ENCODE measurements at regions of chr3 and their contacts with region 1.

Region 1: GRCh38 chr3:156509189-156510174 is 45.4 kb downstream of the SSR3 start:
- DNase-seq: no peak
- H3K4me3 Mint-ChIP-seq: no peak overlapping the region
- H3K27ac Mint-ChIP-seq: no peak overlapping the region
- H3K4me1 Mint-ChIP-seq: peaks cover 15% of the 10 kb centered on the region
- H3K27me3 Mint-ChIP-seq: peaks cover 4% of the 10 kb centered on the region

Region 2: DNA sequence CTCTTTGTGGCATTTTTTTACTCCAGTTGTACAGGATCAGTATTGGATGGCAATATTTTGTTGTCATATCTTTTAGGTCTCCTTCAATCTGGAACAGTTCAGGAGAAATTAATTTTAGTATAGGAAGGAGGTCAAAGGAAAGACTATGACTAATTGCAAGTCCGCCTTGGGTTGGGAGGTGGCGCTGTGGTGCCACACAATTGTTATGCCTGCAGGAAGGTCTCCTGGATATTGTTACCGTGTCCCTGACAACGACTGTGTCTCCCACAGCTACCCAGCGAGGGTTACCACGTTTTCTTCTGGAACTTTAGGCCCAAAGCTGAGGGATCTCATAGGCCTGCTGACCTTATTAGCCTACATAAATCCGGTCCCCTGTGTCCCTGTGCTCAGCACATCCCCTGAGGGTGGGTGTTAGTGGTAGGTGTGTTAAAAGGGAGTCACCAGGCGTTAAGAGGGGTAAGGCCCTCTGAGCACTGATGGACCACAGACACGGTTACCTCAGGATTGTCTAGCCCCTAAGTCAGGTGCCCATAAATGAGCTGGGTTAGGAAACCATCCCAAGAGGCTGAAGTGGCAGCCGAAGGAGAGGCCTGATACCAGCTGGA is 357.6 kb before region 1 on chr3:
- CTCF ChIA-PET with region 1: interaction called, 86 read pairs
- intact Hi-C with region 1: loop called (anchors 1 kb)
- DNase-seq: peak; percentile 77
- H3K4me3 Mint-ChIP-seq: no peak overlapping the region
- H3K27ac Mint-ChIP-seq: no peak overlapping the region
- H3K4me1 Mint-ChIP-seq: peaks cover 3% of the 10 kb centered on the region
- H3K27me3 Mint-ChIP-seq: no peaks in the 10 kb centered on the region

Region 3: GRCh38 chr3:156449712-156450574 is 59.5 kb before region 1 on chr3:
- CTCF ChIA-PET with region 1: interaction called, 17 read pairs
- intact Hi-C with region 1: loop called (anchors 1 kb)
- DNase-seq: no peak
- H3K4me3 Mint-ChIP-seq: no peak overlapping the region
- H3K27ac Mint-ChIP-seq: no peak overlapping the region
- H3K4me1 Mint-ChIP-seq: no peaks in the 10 kb centered on the region
- H3K27me3 Mint-ChIP-seq: peaks cover 5% of the 10 kb centered on the region

Region 4: DNA sequence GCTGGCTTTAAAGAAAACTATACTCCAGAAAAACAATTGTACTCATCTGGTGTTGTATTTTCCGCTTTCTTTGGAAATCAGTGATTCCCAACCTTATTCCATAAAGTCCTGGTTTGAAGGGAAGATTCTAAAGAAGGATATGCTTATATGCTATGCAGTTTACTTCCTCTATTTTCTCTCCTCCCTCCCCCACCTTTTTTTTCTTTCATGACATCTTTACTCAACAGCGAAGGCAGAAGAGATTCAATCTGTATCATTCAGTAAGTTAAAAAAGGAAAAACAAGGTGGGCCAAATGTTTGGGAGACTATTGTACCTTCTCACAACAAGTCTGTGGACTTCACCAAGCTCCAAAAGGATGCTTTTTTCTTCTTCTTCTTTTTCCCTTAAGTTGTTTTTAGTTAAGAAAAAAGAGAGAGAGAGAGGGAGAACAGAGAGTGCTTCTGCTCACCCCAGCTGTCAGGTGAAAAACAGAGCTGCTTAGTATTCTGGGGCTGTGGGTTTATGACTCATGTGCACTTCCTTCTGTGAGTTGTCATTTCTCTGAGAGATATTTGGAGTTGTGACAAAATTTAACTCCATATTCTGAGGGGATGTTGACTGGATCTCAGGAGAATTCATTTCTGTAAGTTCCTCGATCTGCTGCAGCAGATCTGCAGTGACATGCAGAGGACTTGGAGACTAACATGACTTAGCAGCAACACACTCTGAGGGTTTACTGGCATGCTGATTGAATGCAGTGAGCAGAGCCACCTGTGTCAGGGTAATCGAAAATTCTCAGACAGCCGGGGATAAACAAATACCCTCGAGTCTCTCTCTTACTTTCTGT is 25.3 kb before region 1 on chr3:
- CTCF ChIA-PET with region 1: interaction called, 7 read pairs
- intact Hi-C with region 1: loop called (anchors 1 kb)
- DNase-seq: peak; percentile 70
- H3K4me3 Mint-ChIP-seq: peak overlapping the region; percentile 51
- H3K27ac Mint-ChIP-seq: peak overlapping the region; percentile 81
- H3K4me1 Mint-ChIP-seq: peaks cover 42% of the 10 kb centered on the region
- H3K27me3 Mint-ChIP-seq: no peaks in the 10 kb centered on the region

Region 5: DNA sequence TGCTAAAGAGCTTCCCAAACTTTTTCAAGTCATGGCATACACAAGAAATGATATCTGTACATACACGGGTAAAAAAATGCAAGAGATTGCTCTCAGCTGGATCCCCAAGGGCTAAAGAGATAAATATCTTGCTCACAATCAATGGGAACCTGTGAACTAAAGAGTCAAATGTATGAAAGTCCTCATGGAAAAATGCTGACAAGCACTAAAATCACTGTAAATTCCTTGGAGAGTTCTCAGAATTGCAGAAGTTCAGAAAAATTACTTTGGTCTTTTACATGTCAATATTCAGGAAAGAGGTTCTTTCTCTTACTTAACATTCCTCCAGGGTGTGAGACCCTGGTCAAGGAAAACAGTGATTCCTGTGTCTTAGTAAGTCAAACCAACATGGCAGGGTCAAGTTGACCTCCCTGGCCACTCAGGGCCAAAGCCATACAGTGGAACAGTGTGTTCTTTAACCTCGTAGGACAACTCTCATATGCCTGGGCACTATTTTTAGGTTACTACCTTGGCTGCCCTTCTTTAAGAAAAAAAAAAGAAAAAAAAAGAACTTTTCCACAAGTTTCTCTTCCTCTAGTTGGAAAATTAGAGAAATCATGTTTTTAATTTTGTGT is 32.7 kb after region 1 on chr3:
- CTCF ChIA-PET with region 1: no interaction called
- intact Hi-C with region 1: loop called (anchors 1 kb)
- DNase-seq: no peak
- H3K4me3 Mint-ChIP-seq: no peak overlapping the region
- H3K27ac Mint-ChIP-seq: no peak overlapping the region
- H3K4me1 Mint-ChIP-seq: peaks cover 12% of the 10 kb centered on the region
- H3K27me3 Mint-ChIP-seq: no peaks in the 10 kb centered on the region

Measured in activated naive CD4-positive, alpha-beta T cell treated with anti-CD3 and anti-CD28 coated beads for 36 hours (primary cell).